MCF 10A (cell line): ENCODE measurements at regions of chr22 and their contacts with region 1.

Region 1: GRCh38 chr22:32985899-32986765 is 72.0 kb downstream of the SYN3 start:
- DNase-seq: peak; percentile 87
- H3K4me3 Mint-ChIP-seq: peak overlapping the region; percentile 32
- H3K27ac Mint-ChIP-seq: peak overlapping the region; percentile 79
- H3K4me1 Mint-ChIP-seq: peaks cover 39% of the 10 kb centered on the region
- H3K27me3 Mint-ChIP-seq: no peaks in the 10 kb centered on the region
- CTCF ChIP-seq: peak; percentile 79

Region 2: DNA sequence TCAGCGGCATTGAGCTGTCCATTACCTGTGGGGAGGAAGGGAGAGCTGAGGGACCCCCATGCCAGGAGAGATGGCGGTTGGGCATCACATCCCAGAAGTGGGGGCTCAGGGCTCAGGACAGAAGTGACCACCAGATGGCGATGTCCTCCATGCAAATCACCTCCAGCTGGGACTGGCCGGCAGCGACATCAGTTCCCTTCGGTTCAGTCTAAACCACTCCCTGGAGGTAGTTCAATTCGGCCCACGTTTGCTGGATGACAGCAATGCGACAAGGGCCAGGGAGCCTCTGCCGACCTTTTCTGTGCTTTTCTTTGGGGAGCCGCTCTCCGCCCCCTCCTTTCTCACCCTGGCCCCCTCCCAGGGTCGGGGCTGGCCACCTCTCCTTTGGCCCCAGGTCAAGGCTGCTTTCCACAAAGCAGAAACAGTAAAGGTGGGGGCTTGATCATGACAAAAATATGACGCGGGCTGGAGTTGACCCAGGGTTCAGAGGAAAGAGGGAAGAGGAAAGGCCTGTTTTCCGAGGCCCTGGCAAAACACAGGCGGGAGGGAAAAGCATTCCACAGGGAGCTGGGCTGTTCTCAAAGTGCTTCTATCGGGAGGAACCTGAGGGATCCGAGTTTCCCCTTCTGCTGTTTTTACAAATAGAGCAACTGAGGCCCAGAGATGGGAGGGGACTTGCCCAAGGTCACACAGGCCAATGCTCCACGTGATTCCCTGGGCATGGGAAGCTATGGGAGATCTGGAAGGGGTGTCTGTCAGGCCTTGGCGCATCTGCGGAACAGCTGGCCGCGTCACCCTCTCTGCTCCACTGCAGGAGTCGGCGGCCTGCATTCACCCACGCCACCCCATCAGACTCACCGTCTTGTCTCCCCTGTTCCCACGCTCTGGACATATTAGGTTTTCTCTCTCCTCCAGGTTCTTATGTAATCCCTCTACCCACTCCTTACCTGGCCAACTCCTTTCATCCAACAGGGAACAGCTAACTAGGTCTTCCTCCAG is 456.8 kb before region 1 on chr22:
- CTCF ChIA-PET with region 1: interaction called, 63 read pairs
- POLR2A ChIA-PET with region 1: interaction called, 4 read pairs
- intact Hi-C with region 1: no loop called
- DNase-seq: peak; percentile 76
- H3K4me3 Mint-ChIP-seq: no peak overlapping the region
- H3K27ac Mint-ChIP-seq: no peak overlapping the region
- H3K4me1 Mint-ChIP-seq: peaks cover 26% of the 10 kb centered on the region
- H3K27me3 Mint-ChIP-seq: no peaks in the 10 kb centered on the region
- CTCF ChIP-seq: peak; percentile 85

Region 3: DNA sequence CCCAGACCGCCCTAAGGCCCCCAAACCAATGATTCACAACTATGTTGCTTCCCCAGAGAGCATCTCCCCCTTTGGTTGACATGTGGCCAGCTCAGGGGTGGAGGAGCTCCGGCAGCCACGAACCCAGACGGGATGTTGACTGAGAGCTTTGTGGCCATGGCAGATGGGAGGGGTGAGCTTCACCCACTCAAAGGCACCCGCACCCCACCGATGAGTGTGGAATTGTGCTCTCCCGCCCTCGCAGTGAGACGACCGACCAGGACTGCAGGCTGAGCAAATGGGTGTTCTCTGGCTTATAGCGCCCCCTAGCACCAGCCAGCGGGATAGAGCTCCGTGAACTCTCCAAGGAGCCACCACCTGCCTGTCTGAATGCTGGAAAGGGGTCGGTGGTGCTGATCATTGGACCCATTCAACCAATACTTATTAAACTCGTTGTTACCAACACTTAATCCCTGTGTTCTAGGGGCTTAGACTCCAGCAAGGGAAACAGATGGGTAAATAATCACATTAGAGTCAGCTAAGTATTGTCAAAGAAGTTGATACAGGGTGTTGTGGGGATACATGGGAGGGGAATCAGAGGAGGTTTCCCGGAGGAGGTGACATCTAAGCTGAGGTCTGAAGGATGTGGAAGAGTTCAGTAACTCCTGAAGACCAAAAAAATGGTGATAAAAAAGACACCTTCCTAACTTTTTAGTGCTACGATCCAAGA is 189.1 kb before region 1 on chr22:
- CTCF ChIA-PET with region 1: interaction called, 19 read pairs
- POLR2A ChIA-PET with region 1: interaction called, 5 read pairs
- intact Hi-C with region 1: no loop called
- DNase-seq: peak; percentile 55
- H3K4me3 Mint-ChIP-seq: no peak overlapping the region
- H3K27ac Mint-ChIP-seq: no peak overlapping the region
- H3K4me1 Mint-ChIP-seq: peaks cover under 1% of the 10 kb centered on the region
- H3K27me3 Mint-ChIP-seq: no peaks in the 10 kb centered on the region
- CTCF ChIP-seq: peak; percentile 95

Region 4: GRCh38 chr22:32836280-32837123 is 149.6 kb before region 1 on chr22:
- CTCF ChIA-PET with region 1: interaction called, 14 read pairs
- POLR2A ChIA-PET with region 1: interaction called, 3 read pairs
- intact Hi-C with region 1: no loop called
- DNase-seq: peak; percentile 24
- H3K4me3 Mint-ChIP-seq: no peak overlapping the region
- H3K27ac Mint-ChIP-seq: no peak overlapping the region
- H3K4me1 Mint-ChIP-seq: peaks cover 7% of the 10 kb centered on the region
- H3K27me3 Mint-ChIP-seq: no peaks in the 10 kb centered on the region
- CTCF ChIP-seq: peak; percentile 51

Region 5: GRCh38 chr22:32967386-32968101 is 18.6 kb before region 1 on chr22:
- CTCF ChIA-PET with region 1: interaction called, 10 read pairs
- POLR2A ChIA-PET with region 1: no interaction called
- intact Hi-C with region 1: no loop called
- DNase-seq: no peak
- H3K4me3 Mint-ChIP-seq: no peak overlapping the region
- H3K27ac Mint-ChIP-seq: no peak overlapping the region
- H3K4me1 Mint-ChIP-seq: peaks cover 6% of the 10 kb centered on the region
- H3K27me3 Mint-ChIP-seq: no peaks in the 10 kb centered on the region
- CTCF ChIP-seq: no peak

Region 6: GRCh38 chr22:33006220-33006954 is 20.3 kb after region 1 on chr22:
- CTCF ChIA-PET with region 1: interaction called, 24 read pairs
- POLR2A ChIA-PET with region 1: interaction called, 52 read pairs
- intact Hi-C with region 1: no loop called
- DNase-seq: peak; percentile 92
- H3K4me3 Mint-ChIP-seq: peak overlapping the region; percentile 52
- H3K27ac Mint-ChIP-seq: no peak overlapping the region
- H3K4me1 Mint-ChIP-seq: peaks cover 24% of the 10 kb centered on the region
- H3K27me3 Mint-ChIP-seq: no peaks in the 10 kb centered on the region
- CTCF ChIP-seq: no peak

Region 7: DNA sequence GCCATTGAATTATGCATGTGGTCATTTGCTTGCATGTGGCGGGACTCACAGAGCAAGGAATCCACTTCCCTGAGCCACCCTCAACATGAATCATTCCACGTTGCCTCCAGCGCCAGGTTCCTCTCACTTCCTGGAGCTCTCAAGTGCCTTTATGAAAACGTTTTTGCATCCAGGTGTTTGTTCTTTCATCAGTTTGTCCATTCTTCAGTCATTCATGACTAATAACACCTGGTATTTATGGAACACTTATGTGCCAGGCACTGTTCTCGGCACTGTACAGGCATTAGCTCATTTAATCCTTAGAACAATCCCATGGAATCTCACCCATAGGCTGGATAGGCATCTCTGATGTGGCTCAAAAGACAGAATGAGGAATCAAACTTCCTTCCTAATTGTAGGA is 328.2 kb after region 1 on chr22:
- CTCF ChIA-PET with region 1: no interaction called
- POLR2A ChIA-PET with region 1: no interaction called
- intact Hi-C with region 1: no loop called
- DNase-seq: no peak
- H3K4me3 Mint-ChIP-seq: no peak overlapping the region
- H3K27ac Mint-ChIP-seq: peak overlapping the region; percentile 23
- H3K4me1 Mint-ChIP-seq: no peaks in the 10 kb centered on the region
- H3K27me3 Mint-ChIP-seq: no peaks in the 10 kb centered on the region
- CTCF ChIP-seq: no peak